Endothelial cell of umbilical vein (primary cell): ENCODE measurements at regions of chr7 and their contacts with region 1.

Region 1: GRCh38 chr7:41940760-41941343 is 238.0 kb upstream of the INHBA start:
- DNase-seq: peak; percentile 72
- H3K4me3 ChIP-seq: no peak overlapping the region
- H3K27ac ChIP-seq: no peak overlapping the region
- H3K4me1 ChIP-seq: no peaks in the 10 kb centered on the region
- H3K27me3 ChIP-seq: peaks cover under 1 to 3% of the 10 kb centered on the region in 2 experiments
- CTCF ChIP-seq: peak; percentile 86 to 87
- POLR2A ChIP-seq: no peak

Region 2: DNA sequence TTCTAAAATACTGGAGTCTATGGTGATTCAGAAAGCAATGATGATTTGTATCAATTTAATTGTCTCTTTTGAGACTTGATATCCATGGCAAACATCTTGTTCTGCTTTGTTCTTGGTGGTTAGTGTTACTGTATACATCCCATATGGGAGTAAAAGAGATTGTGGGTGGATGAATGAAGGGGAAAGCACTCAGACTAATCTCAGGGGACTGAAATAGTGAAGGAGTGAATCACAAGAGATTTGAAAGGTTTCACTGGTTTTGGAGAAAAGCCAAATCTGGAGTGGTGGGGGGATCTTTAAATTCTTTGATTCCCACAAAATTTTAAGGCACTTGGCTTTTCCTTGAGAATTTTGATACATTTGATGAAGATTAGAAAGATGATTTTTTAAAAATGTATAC is 607.3 kb before region 1 on chr7:
- CTCF ChIA-PET with region 1: no interaction called
- POLR2A ChIA-PET with region 1: no interaction called
- dilution Hi-C with region 1: no loop called
- intact Hi-C with region 1: no loop called
- DNase-seq: no peak
- H3K4me3 ChIP-seq: no peak overlapping the region
- H3K27ac ChIP-seq: no peak overlapping the region
- H3K4me1 ChIP-seq: no peaks in the 10 kb centered on the region
- H3K27me3 ChIP-seq: no peaks in the 10 kb centered on the region
- CTCF ChIP-seq: no peak
- POLR2A ChIP-seq: no peak

Region 3: GRCh38 chr7:41921453-41921981 is 19.3 kb before region 1 on chr7:
- CTCF ChIA-PET with region 1: interaction called, 22 read pairs
- POLR2A ChIA-PET with region 1: no interaction called
- dilution Hi-C with region 1: no loop called
- intact Hi-C with region 1: no loop called
- DNase-seq: no peak
- H3K4me3 ChIP-seq: no peak overlapping the region
- H3K27ac ChIP-seq: no peak overlapping the region
- H3K4me1 ChIP-seq: peaks cover 5% of the 10 kb centered on the region
- H3K27me3 ChIP-seq: no peaks in the 10 kb centered on the region
- CTCF ChIP-seq: no peak
- POLR2A ChIP-seq: no peak

Region 4: DNA sequence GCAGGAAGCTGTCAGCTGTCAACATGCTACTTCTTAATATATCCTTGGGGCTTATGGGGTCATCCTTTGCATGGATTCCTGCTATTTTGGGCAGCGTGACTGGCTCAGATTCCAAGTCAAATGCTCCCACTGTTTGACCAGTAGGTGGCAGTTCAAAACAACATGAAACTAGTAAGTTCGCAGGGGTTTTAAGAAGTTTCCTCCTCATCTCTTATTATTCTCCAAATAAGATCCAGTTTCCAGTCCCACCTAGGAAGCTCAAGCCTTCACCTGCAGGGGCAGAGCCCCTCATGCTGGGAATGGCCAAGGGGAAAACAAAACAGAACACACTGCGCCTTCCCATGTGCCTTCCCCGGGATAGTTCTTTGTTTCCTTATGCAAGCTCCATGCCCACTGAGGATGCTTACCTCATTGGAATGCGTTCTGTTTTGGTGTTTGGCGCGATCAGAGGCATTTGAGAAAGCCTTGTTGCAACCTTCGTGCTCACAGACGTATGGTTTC is 36.3 kb after region 1 on chr7:
- CTCF ChIA-PET with region 1: interaction called, 106 read pairs
- POLR2A ChIA-PET with region 1: no interaction called
- dilution Hi-C with region 1: no loop called
- intact Hi-C with region 1: loop called (anchors 2 kb)
- DNase-seq: peak; percentile 65
- H3K4me3 ChIP-seq: no peak overlapping the region
- H3K27ac ChIP-seq: no peak overlapping the region
- H3K4me1 ChIP-seq: no peaks in the 10 kb centered on the region
- H3K27me3 ChIP-seq: no peaks in the 10 kb centered on the region
- CTCF ChIP-seq: peak; percentile 54 to 69
- POLR2A ChIP-seq: no peak

Region 5: DNA sequence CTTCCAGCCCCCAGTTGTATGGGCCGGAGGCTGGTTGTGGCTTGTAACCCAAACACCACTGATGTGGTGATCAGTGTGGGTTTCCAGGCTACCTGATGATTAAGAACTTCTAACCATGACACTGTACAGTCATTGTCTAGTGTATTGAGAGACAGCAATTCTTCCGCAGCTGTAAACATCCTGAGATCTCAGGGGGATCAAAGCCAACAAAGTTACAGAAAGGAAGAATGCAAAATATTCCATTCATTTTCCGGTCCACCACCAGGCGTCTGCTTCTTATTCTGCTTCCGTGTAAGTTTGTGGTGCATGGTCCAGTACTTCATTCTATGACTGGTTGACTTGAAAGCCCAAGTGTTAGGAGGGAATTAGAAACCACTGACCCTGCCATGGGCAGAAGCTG is 306.4 kb after region 1 on chr7:
- CTCF ChIA-PET with region 1: no interaction called
- POLR2A ChIA-PET with region 1: no interaction called
- dilution Hi-C with region 1: no loop called
- intact Hi-C with region 1: no loop called
- DNase-seq: no peak
- H3K4me3 ChIP-seq: no peak overlapping the region
- H3K27ac ChIP-seq: no peak overlapping the region
- H3K4me1 ChIP-seq: peaks cover 13% of the 10 kb centered on the region
- H3K27me3 ChIP-seq: no peaks in the 10 kb centered on the region
- CTCF ChIP-seq: no peak
- POLR2A ChIP-seq: no peak

Region 6: GRCh38 chr7:42690794-42691639 is 750.2 kb after region 1 on chr7:
- CTCF ChIA-PET with region 1: interaction called, 86 read pairs
- POLR2A ChIA-PET with region 1: no interaction called
- dilution Hi-C with region 1: no loop called
- intact Hi-C with region 1: loop called (anchors 1 kb)
- DNase-seq: peak; percentile 32
- H3K4me3 ChIP-seq: no peak overlapping the region
- H3K27ac ChIP-seq: no peak overlapping the region
- H3K4me1 ChIP-seq: no peaks in the 10 kb centered on the region
- H3K27me3 ChIP-seq: no peaks in the 10 kb centered on the region
- CTCF ChIP-seq: peak; percentile 25 to 43
- POLR2A ChIP-seq: no peak

Region 7: DNA sequence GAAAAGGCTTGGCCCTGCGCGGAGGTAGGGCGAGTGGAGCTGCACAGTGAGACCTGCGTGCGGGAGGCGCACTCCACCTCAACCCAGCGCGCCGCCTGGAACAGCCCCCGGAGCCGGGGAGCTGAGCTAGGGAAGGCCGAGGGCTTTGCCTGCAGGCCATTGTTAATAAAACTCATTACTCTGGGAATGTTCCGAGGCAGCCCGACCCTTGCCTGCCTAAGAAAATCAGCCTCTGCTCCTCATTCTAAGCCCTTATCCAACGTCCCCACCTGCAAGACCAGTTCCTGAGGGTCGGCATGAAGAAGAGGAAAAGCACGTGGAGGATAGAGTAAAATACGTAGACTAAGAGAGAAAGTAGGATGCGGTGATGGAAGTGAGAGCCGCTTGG is 915.7 kb after region 1 on chr7:
- CTCF ChIA-PET with region 1: interaction called, 13 read pairs
- POLR2A ChIA-PET with region 1: no interaction called
- dilution Hi-C with region 1: no loop called
- intact Hi-C with region 1: no loop called
- DNase-seq: peak; percentile 26
- H3K4me3 ChIP-seq: peak overlapping the region; percentile 41 to 73 (median 69)
- H3K27ac ChIP-seq: no peak overlapping the region
- H3K4me1 ChIP-seq: peaks cover 10% of the 10 kb centered on the region
- H3K27me3 ChIP-seq: peaks cover 5 to 9% of the 10 kb centered on the region in 2 experiments
- CTCF ChIP-seq: no peak
- POLR2A ChIP-seq: no peak

Region 8: GRCh38 chr7:42931834-42932651 is 991.2 kb after region 1 on chr7 and contains the starts of genes MRPL32 and PSMA2:
- CTCF ChIA-PET with region 1: interaction called, 17 read pairs
- POLR2A ChIA-PET with region 1: no interaction called
- dilution Hi-C with region 1: no loop called
- intact Hi-C with region 1: loop called (anchors 5 kb)
- DNase-seq: peak; percentile 99
- H3K4me3 ChIP-seq: peak within 1 kb of the TSS; percentile 54 to 95 (median 91)
- H3K27ac ChIP-seq: peak within 1 kb of the TSS; percentile 64
- H3K4me1 ChIP-seq: peaks cover 29% of the 10 kb centered on the region
- H3K27me3 ChIP-seq: no peaks in the 10 kb centered on the region
- CTCF ChIP-seq: no peak
- POLR2A ChIP-seq: peak; percentile 74
- total RNA-seq, gene MRPL32: 56.6 and 62.2 TPM in 2 replicates
- total RNA-seq, gene PSMA2: 110 and 118 TPM in 2 replicates